ENCODE measurements at regions of chr2 and their contacts with region 1.

Region 1: DNA sequence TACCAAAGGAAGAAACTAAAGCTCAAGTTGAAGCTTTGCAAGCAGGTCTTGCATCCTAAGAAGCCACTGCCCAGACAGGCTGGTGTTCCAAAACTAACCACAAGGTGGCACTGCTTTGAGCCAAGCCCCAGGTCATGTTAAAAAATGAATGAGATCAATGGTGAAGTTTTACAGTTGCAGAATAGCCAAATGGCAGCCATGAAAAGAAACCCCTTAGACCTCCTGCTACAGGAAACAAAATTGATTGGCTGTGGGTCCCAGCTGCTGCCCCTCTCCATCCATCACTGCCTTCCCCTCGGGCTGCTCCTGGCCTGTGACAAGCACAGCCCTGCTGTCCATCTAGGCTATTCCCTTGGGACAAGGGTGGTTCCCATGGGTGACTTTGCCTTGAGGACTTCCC is 20.7 kb upstream of the MREG start:
- DNase-seq: peak; percentile 64
- H3K4me3 Mint-ChIP-seq: no peak overlapping the region
- H3K27ac Mint-ChIP-seq: no peak overlapping the region
- H3K4me1 Mint-ChIP-seq: peaks cover 15% of the 10 kb centered on the region
- H3K27me3 Mint-ChIP-seq: no peaks in the 10 kb centered on the region
- CTCF ChIP-seq: peak; percentile 74

Region 2: DNA sequence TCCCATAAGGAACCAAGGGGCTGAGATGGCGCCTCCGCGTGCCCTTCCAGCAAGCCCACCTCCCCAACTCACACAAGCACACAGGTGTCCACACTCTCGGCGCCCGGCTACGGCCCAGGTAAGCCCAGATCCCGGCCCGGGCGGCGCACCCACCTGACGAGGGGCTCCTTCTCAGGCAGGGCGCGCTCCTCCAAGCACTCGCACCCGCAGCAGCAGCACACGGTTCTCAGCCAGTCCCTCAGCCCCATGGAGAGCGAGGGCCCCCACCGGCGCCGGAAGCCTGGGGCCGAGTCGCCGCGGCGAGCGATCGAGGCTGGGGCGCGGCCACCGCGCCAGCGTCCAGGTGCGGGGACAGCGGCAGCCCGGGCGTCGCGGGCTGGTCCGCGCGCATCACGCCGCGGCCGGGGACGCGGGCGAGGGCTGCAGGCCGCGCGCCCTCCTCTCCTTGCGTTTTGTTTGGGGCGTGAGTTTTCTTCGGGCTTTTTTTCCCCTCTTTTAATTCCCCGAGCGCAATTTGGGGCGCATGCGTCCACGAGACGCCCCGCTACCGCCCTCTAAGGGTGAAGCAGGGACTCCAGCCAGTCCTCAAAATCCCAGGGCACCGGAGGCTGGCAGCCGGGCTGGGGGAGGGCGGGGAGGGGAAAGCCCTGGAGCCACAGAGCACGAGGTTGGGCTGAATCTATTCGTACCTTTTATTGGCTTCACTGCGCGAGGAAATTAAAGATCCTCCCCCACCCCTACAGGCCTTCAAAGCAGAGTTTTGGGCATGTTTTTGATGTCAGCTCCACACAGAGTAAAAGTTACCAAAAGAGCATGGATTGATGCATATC is 20.8 kb before region 1 on chr2 and contains the start of gene MREG:
- CTCF ChIA-PET with region 1: interaction called, 27 read pairs
- POLR2A ChIA-PET with region 1: interaction called, 3 read pairs
- intact Hi-C with region 1: no loop called
- DNase-seq: peak; percentile 89
- H3K4me3 Mint-ChIP-seq: peak within 1 kb of the TSS; percentile 82
- H3K27ac Mint-ChIP-seq: peak within 1 kb of the TSS; percentile 84
- H3K4me1 Mint-ChIP-seq: peaks cover 31% of the 10 kb centered on the region
- H3K27me3 Mint-ChIP-seq: no peaks in the 10 kb centered on the region
- CTCF ChIP-seq: peak; percentile 52
- total RNA-seq, gene MREG: 6.8 and 10.4 TPM in 2 replicates

Region 3: DNA sequence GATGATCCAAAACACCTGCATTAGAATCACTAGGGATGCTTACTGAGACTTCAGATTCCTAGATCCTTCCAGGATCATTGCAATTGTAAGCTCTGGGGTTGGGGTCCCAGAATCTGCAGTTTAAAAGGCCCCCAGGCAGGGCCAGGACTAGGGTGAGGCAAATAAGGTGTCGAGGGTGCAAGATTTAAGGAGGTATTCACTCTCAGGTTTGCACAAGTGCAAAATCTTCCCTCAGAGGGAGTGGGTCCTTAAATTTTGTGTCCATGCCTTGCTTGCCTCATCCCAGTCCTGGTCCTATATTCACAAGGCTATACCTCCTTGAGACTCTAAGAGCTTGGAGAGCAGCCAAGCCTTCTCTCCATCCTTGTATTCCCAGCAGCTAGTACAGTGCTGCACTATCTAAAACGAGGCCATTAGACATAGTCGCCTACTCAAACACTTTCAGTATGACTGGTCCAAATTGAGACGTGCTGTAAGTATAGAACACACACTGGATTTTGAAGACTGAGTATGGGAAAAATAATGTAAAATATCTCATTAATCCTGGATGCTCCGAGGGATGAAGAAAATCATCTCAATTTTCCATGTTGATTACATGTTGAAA is 10.9 kb after region 1 on chr2:
- CTCF ChIA-PET with region 1: interaction called, 39 read pairs
- POLR2A ChIA-PET with region 1: interaction called, 3 read pairs
- intact Hi-C with region 1: no loop called
- DNase-seq: no peak
- H3K4me3 Mint-ChIP-seq: no peak overlapping the region
- H3K27ac Mint-ChIP-seq: no peak overlapping the region
- H3K4me1 Mint-ChIP-seq: no peaks in the 10 kb centered on the region
- H3K27me3 Mint-ChIP-seq: no peaks in the 10 kb centered on the region
- CTCF ChIP-seq: no peak

Region 4: GRCh38 chr2:216057688-216058193 is 23.7 kb after region 1 on chr2:
- CTCF ChIA-PET with region 1: interaction called, 23 read pairs
- POLR2A ChIA-PET with region 1: no interaction called
- intact Hi-C with region 1: no loop called
- DNase-seq: no peak
- H3K4me3 Mint-ChIP-seq: no peak overlapping the region
- H3K27ac Mint-ChIP-seq: peak overlapping the region; percentile 28
- H3K4me1 Mint-ChIP-seq: peaks cover 5% of the 10 kb centered on the region
- H3K27me3 Mint-ChIP-seq: no peaks in the 10 kb centered on the region
- CTCF ChIP-seq: no peak

Measured in MCF 10A (cell line).